CD14-positive monocyte (primary cell): ENCODE measurements at regions of chr2 and their contacts with region 1.

Region 1: GRCh38 chr2:229586746-229587705 is 127.3 kb downstream of the DNER start:
- DNase-seq: peak; percentile 39 to 68 (median 65)
- H3K4me3 ChIP-seq: peak overlapping the region in 1 of 3 experiments; percentile 34
- H3K4me3 Mint-ChIP-seq: peak overlapping the region; percentile 37 to 67
- H3K27ac ChIP-seq: no peak overlapping the region
- H3K27ac Mint-ChIP-seq: peak overlapping the region in 2 of 7 donors; percentile 21 to 25
- H3K4me1 ChIP-seq: peaks cover 0 to 5% of the 10 kb centered on the region in 2 donors
- H3K4me1 Mint-ChIP-seq: peaks cover 8% of the 10 kb centered on the region
- H3K27me3 ChIP-seq: peaks cover 0 to 2% of the 10 kb centered on the region in 2 donors
- H3K27me3 Mint-ChIP-seq: peaks cover 2 to 7% (median 7%) of the 10 kb centered on the region in 3 donors
- CTCF ChIP-seq: peak; percentile 91

Region 2: DNA sequence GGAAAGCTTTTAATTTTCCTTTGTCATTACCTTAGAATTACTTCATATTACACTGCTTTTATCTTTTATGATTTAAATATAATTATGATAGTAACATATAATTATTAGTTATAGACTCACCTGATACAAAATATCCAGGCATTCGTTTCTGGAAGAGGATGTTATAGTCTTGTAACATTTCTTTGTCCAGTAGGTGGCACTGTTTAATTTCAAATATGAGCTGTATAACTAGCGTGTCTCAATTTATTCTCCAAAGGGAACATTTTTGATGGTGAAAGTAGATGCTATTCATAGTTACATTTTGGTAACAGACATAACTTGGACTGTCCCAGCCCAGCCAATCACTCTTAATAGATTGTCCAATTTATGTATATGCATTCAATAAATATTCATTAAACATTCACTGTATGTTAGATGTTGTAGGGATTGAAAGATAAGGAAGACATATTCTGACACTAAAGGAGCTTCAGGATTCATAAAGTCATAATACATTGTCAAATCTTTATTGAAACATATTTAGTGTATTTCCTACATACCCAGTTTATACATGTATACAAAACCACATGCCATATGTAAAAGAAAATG is 1696.4 kb before region 1 on chr2:
- intact Hi-C with region 1: loop called in 1 of 2 experiments (anchors 10 kb)
- DNase-seq: peak in 2 of 3 donors; percentile 40 to 62
- H3K4me3 ChIP-seq: no peak overlapping the region
- H3K4me3 Mint-ChIP-seq: no peak overlapping the region
- H3K27ac ChIP-seq: no peak overlapping the region
- H3K27ac Mint-ChIP-seq: no peak overlapping the region
- H3K4me1 ChIP-seq: peaks cover 0 to 10% of the 10 kb centered on the region in 2 donors
- H3K4me1 Mint-ChIP-seq: peaks cover 7% of the 10 kb centered on the region
- H3K27me3 ChIP-seq: no peaks in the 10 kb centered on the region
- H3K27me3 Mint-ChIP-seq: peaks cover 1 to 7% (median 2%) of the 10 kb centered on the region in 3 donors
- CTCF ChIP-seq: peak; percentile 84

Region 3: GRCh38 chr2:229133155-229133772 is 453.8 kb before region 1 on chr2:
- intact Hi-C with region 1: loop called in 1 of 2 experiments (anchors 5 kb)
- DNase-seq: peak in 2 of 3 donors; percentile 16 to 32
- H3K4me3 ChIP-seq: no peak overlapping the region
- H3K4me3 Mint-ChIP-seq: no peak overlapping the region
- H3K27ac ChIP-seq: no peak overlapping the region
- H3K27ac Mint-ChIP-seq: no peak overlapping the region
- H3K4me1 ChIP-seq: no peaks in the 10 kb centered on the region
- H3K4me1 Mint-ChIP-seq: no peaks in the 10 kb centered on the region
- H3K27me3 ChIP-seq: no peaks in the 10 kb centered on the region
- H3K27me3 Mint-ChIP-seq: no peaks in the 10 kb centered on the region
- CTCF ChIP-seq: peak; percentile 20

Region 4: GRCh38 chr2:229205704-229206103 is 381.3 kb before region 1 on chr2:
- intact Hi-C with region 1: no loop called
- DNase-seq: no peak
- H3K4me3 ChIP-seq: no peak overlapping the region
- H3K4me3 Mint-ChIP-seq: no peak overlapping the region
- H3K27ac ChIP-seq: no peak overlapping the region
- H3K27ac Mint-ChIP-seq: no peak overlapping the region
- H3K4me1 ChIP-seq: no peaks in the 10 kb centered on the region
- H3K4me1 Mint-ChIP-seq: no peaks in the 10 kb centered on the region
- H3K27me3 ChIP-seq: no peaks in the 10 kb centered on the region
- H3K27me3 Mint-ChIP-seq: peaks cover 0 to 1% (median 0%) of the 10 kb centered on the region in 3 donors
- CTCF ChIP-seq: no peak

Region 5: GRCh38 chr2:229725716-229726574 is 138.9 kb after region 1 on chr2:
- intact Hi-C with region 1: no loop called
- DNase-seq: no peak
- H3K4me3 ChIP-seq: no peak overlapping the region
- H3K4me3 Mint-ChIP-seq: no peak overlapping the region
- H3K27ac ChIP-seq: no peak overlapping the region
- H3K27ac Mint-ChIP-seq: no peak overlapping the region
- H3K4me1 ChIP-seq: no peaks in the 10 kb centered on the region
- H3K4me1 Mint-ChIP-seq: peaks cover 4% of the 10 kb centered on the region
- H3K27me3 ChIP-seq: no peaks in the 10 kb centered on the region
- H3K27me3 Mint-ChIP-seq: peaks cover 3 to 4% (median 3%) of the 10 kb centered on the region in 3 donors
- CTCF ChIP-seq: no peak

Region 6: GRCh38 chr2:230306474-230306873 is 719.4 kb after region 1 on chr2:
- intact Hi-C with region 1: no loop called
- DNase-seq: no peak
- H3K4me3 ChIP-seq: no peak overlapping the region
- H3K4me3 Mint-ChIP-seq: no peak overlapping the region
- H3K27ac ChIP-seq: no peak overlapping the region
- H3K27ac Mint-ChIP-seq: no peak overlapping the region
- H3K4me1 ChIP-seq: no peaks in the 10 kb centered on the region
- H3K4me1 Mint-ChIP-seq: peaks cover 6% of the 10 kb centered on the region
- H3K27me3 ChIP-seq: no peaks in the 10 kb centered on the region
- H3K27me3 Mint-ChIP-seq: no peaks in the 10 kb centered on the region
- CTCF ChIP-seq: no peak